SK-N-SH (cell line): ENCODE measurements at regions of chr15 and their contacts with region 1.

Region 1: GRCh38 chr15:78872972-78873792 is 492 bp downstream of the MORF4L1 start:
- DNase-seq: peak; percentile 85
- H3K4me3 ChIP-seq: peak overlapping the region; percentile 66 to 92
- H3K27ac ChIP-seq: peak overlapping the region; percentile 92 to 100
- H3K4me1 ChIP-seq: peaks cover 7 to 11% of the 10 kb centered on the region in 2 experiments; a peak in 3 of 4 replicates
- H3K27me3 ChIP-seq: no peaks in the 10 kb centered on the region
- CTCF ChIP-seq: peak; percentile 56
- EP300 ChIP-seq: no peak; a peak in 2 of 4 replicates
- RAD21 ChIP-seq: peak; percentile 23; the same call in 1 of the 2 replicates

Region 2: DNA sequence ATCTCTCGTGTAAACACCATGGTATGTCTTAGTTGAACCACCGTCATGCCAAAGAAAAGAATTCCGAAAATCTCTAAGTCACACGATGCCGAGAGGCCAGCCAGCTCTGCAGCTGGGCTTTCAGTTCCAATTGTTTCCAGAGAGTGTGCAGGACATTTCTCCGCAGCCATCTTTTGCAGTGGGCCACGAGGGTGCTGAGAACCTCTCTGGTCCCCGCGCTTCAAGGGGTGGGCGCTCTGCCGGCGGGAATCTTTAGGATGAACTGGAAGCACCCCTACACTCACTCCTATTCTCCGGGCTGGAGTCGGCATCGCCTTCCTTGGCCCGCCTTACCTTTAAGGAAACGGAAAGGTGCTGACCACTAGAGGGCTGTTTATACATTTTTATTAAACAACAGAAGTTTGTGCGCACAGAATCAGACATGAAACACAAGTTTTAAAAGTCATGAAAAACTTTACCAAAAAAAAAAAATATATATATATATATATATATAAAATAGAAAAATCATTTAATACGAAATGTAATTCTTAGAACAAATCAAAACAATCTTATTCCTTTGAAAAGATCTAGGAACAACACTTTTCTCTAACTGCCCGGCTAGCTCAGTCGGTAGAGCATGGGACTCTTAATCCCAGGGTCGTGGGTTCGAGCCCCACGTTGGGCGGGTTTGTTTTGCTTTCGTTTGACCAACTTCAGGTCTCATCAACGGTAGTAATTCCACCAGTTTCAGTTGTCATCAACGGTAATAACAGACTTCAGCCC is 13.0 kb before region 1 on chr15:
- CTCF ChIA-PET with region 1: interaction called, 17 read pairs
- POLR2A ChIA-PET with region 1: no interaction called
- DNase-seq: peak; percentile 83
- H3K4me3 ChIP-seq: peak overlapping the region; percentile 53 to 64
- H3K27ac ChIP-seq: peak overlapping the region; percentile 82 to 83
- H3K4me1 ChIP-seq: no peaks in the 10 kb centered on the region; a peak in 1 of 4 replicates
- H3K27me3 ChIP-seq: no peaks in the 10 kb centered on the region
- CTCF ChIP-seq: peak; percentile 63
- EP300 ChIP-seq: no peak; a peak in 1 of 4 replicates
- RAD21 ChIP-seq: peak; percentile 49

Region 3: DNA sequence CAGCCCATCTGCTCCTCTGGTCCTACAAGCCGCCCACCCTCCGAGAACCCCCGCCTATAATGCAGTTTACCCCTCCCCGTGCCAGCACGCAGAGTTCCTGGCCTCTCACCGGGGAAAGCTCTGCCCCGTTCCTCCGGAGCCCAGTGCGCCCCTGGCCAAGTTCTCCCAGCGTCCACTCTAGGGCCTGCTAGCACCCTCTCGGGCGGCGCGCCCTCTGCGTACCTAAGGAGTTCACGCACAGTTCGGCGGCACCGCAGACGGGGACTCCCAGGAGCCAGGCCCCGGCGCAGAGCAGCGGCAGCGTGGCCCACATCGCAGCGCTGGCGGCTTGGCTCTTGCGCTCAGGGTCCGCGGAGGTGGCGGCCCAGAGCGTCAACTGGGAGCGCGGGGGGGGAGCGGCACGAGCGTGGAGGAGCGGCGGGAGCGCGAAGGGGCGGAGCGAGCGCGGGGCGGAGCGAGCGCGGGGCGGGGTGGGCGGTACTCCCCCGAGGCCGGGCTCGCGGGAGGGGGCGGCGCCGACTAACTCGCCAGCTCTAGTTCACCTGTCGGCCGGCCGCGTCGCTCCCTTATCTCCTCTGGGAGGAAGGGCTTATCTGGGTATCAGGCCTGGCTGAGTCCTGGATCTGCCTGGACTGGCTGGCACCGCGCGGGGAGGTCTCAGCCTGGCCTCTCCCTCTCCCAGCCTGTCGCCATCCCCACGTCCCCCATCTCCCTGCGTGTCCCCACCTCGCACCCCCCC is 71.7 kb after region 1 on chr15 and contains the start of gene CTSH:
- CTCF ChIA-PET with region 1: no interaction called
- POLR2A ChIA-PET with region 1: no interaction called
- DNase-seq: peak; percentile 94
- H3K4me3 ChIP-seq: peak within 1 kb of the TSS; percentile 49 to 62
- H3K27ac ChIP-seq: no peak within 1 kb of the TSS
- H3K4me1 ChIP-seq: peaks cover 0 to 11% of the 10 kb centered on the region in 2 experiments; a peak in 1 of 4 replicates
- H3K27me3 ChIP-seq: no peaks in the 10 kb centered on the region
- CTCF ChIP-seq: no peak
- EP300 ChIP-seq: no peak
- RAD21 ChIP-seq: no peak
- polyA plus RNA-seq, gene CTSH: 22.7 and 23.0 TPM in 2 replicates